Mammary epithelial cell (primary cell): ENCODE measurements at regions of chr15 and their contacts with region 1.

Region 1: DNA sequence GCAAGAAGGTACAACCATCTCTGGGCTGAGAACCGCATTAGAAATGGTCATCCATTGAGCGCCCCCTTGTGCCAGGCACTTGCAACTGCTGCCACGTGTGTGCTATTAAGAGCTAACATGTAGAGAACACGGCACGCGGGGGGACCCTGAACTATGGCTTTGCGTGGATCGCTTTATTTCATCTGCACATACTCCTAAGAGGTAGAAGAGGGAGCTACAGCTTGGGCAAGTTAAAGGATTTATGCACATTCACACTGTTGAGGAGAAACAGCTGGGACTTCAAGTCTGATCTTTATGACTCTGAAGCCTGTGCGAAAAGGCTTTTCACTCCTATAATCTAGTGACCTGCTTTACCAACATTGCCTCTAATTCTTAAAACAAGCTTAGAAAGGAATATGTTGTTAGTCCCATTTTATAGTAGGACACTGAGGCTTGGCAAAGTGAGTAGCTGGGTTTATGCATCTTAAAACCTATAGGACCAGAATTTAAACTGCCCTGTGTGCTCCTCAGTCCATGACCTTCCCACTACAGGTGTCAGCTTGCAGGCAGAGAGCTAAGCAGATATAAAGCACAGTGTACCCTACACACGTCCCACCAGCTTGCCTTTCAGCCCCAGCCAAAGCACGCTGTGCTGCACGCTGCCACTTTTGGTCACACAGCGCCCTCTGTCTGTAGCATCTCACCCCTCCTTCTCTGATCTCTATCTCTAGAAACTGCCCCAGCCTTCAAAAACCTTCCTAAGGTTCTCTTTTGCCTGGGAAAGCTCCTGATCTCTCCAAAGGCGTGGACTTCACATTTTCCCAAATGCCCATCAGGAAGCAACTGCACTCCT is 57.8 kb downstream of the STARD5 start:
- DNase-seq: peak; percentile 59
- H3K4me3 ChIP-seq: peak overlapping the region in 1 of 3 experiments; percentile 1
- H3K27ac ChIP-seq: no peak overlapping the region
- H3K4me1 ChIP-seq: peaks cover 5% of the 10 kb centered on the region
- H3K27me3 ChIP-seq: no peaks in the 10 kb centered on the region
- CTCF ChIP-seq: peak; percentile 95 to 96

Region 2: GRCh38 chr15:80977627-80978036 is 288.5 kb before region 1 on chr15:
- CTCF ChIA-PET with region 1: no interaction called
- dilution Hi-C with region 1: no loop called
- in situ Hi-C with region 1: no loop called
- intact Hi-C with region 1: loop called (anchors 1 kb)
- DNase-seq: no peak
- H3K4me3 ChIP-seq: no peak overlapping the region
- H3K27ac ChIP-seq: no peak overlapping the region
- H3K4me1 ChIP-seq: no peaks in the 10 kb centered on the region
- H3K27me3 ChIP-seq: no peaks in the 10 kb centered on the region
- CTCF ChIP-seq: peak; percentile 27 to 46

Region 3: GRCh38 chr15:80989518-80990478 is 276.4 kb before region 1 on chr15 and contains the start of gene MESD:
- CTCF ChIA-PET with region 1: interaction called, 11 read pairs
- dilution Hi-C with region 1: no loop called
- in situ Hi-C with region 1: loop called (anchors 10 kb)
- intact Hi-C with region 1: no loop called
- DNase-seq: peak; percentile 91
- H3K4me3 ChIP-seq: peak within 1 kb of the TSS; percentile 78 to 99 (median 90)
- H3K27ac ChIP-seq: peak within 1 kb of the TSS; percentile 71
- H3K4me1 ChIP-seq: peaks cover 18% of the 10 kb centered on the region
- H3K27me3 ChIP-seq: no peaks in the 10 kb centered on the region
- CTCF ChIP-seq: no peak
- total RNA-seq, gene MESD: 13.2 to 25.9 TPM

Region 4: DNA sequence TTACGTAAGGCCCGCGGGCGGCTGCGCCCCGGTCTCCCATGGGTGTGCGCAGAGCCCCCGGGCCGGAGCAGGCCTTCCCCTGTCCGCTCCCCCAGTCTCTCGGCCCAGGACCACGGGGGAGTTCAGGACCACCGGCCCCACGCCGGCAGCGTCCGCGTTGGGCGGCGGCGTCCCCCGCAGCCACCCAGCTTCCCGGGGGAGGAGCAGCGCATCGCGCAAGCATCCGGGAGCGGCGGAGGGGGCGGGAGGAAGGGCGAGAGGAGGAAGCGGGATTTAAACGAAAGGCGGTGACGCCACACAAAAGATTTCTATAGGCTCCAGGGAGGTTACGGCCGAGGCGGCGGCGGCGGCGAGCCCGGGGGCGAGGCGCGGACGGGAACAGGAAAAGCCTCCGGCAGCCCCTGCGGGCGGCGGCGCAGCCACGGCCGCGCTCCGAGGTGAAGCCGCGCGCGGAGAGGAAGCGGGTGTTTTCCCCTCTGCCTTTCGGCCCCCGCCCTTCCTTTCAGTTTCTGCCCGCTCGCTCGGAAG is 265.5 kb before region 1 on chr15 and contains the start of gene TLNRD1:
- CTCF ChIA-PET with region 1: interaction called, 3 read pairs
- dilution Hi-C with region 1: no loop called
- in situ Hi-C with region 1: loop called (anchors 10 kb)
- intact Hi-C with region 1: loop called (anchors 2 kb)
- DNase-seq: peak; percentile 87
- H3K4me3 ChIP-seq: peak within 1 kb of the TSS; percentile 54 to 80 (median 72)
- H3K27ac ChIP-seq: peak within 1 kb of the TSS; percentile 90
- H3K4me1 ChIP-seq: peaks cover 13% of the 10 kb centered on the region
- H3K27me3 ChIP-seq: no peaks in the 10 kb centered on the region
- CTCF ChIP-seq: no peak
- total RNA-seq, gene TLNRD1: 16.8 to 18.1 TPM

Region 5: GRCh38 chr15:81106560-81106959 is 159.6 kb before region 1 on chr15:
- CTCF ChIA-PET with region 1: interaction called, 18 read pairs
- dilution Hi-C with region 1: no loop called
- in situ Hi-C with region 1: loop called (anchors 5 kb)
- intact Hi-C with region 1: loop called (anchors 1 kb)
- DNase-seq: peak; percentile 67
- H3K4me3 ChIP-seq: no peak overlapping the region
- H3K27ac ChIP-seq: no peak overlapping the region
- H3K4me1 ChIP-seq: peaks cover 11% of the 10 kb centered on the region
- H3K27me3 ChIP-seq: no peaks in the 10 kb centered on the region
- CTCF ChIP-seq: peak; percentile 79 to 82